WTC11 (cell line): ENCODE measurements at regions of chr22 and their contacts with region 1.

Region 1: GRCh38 chr22:20885557-20886323 is 26.9 kb downstream of the SNAP29 start:
- DNase-seq: peak; percentile 89
- ATAC-seq: peak; percentile 98
- H3K4me3 Mint-ChIP-seq: no peak overlapping the region
- H3K27ac Mint-ChIP-seq: peak overlapping the region; percentile 68
- H3K4me1 Mint-ChIP-seq: peaks cover 3% of the 10 kb centered on the region; the same call in 1 of the 2 replicates
- H3K27me3 Mint-ChIP-seq: no peaks in the 10 kb centered on the region
- CTCF ChIP-seq: peak; percentile 71

Region 2: GRCh38 chr22:20803696-20804324 is 81.9 kb before region 1 on chr22:
- CTCF ChIA-PET with region 1: interaction called, 37 read pairs
- POLR2A ChIA-PET with region 1: interaction called, 3 read pairs
- DNase-seq: peak; percentile 71
- ATAC-seq: peak; percentile 89
- H3K4me3 Mint-ChIP-seq: no peak overlapping the region
- H3K27ac Mint-ChIP-seq: no peak overlapping the region; the same call in 1 of the 2 replicates
- H3K4me1 Mint-ChIP-seq: no peaks in the 10 kb centered on the region
- H3K27me3 Mint-ChIP-seq: no peaks in the 10 kb centered on the region
- CTCF ChIP-seq: peak; percentile 47; the same call in 1 of the 2 replicates

Region 3: GRCh38 chr22:20899827-20900423 is 14.2 kb after region 1 on chr22:
- CTCF ChIA-PET with region 1: interaction called, 16 read pairs
- POLR2A ChIA-PET with region 1: no interaction called
- DNase-seq: no peak
- ATAC-seq: no peak
- H3K4me3 Mint-ChIP-seq: no peak overlapping the region
- H3K27ac Mint-ChIP-seq: no peak overlapping the region
- H3K4me1 Mint-ChIP-seq: no peaks in the 10 kb centered on the region
- H3K27me3 Mint-ChIP-seq: no peaks in the 10 kb centered on the region; the same call in none of the 2 replicates
- CTCF ChIP-seq: no peak

Region 4: GRCh38 chr22:20937031-20937793 is 51.5 kb after region 1 on chr22:
- CTCF ChIA-PET with region 1: interaction called, 10 read pairs
- POLR2A ChIA-PET with region 1: no interaction called
- DNase-seq: no peak
- ATAC-seq: no peak
- H3K4me3 Mint-ChIP-seq: no peak overlapping the region; the same call in 1 of the 2 replicates
- H3K27ac Mint-ChIP-seq: peak overlapping the region; percentile 89
- H3K4me1 Mint-ChIP-seq: peaks cover 38% of the 10 kb centered on the region
- H3K27me3 Mint-ChIP-seq: no peaks in the 10 kb centered on the region
- CTCF ChIP-seq: no peak

Region 5: DNA sequence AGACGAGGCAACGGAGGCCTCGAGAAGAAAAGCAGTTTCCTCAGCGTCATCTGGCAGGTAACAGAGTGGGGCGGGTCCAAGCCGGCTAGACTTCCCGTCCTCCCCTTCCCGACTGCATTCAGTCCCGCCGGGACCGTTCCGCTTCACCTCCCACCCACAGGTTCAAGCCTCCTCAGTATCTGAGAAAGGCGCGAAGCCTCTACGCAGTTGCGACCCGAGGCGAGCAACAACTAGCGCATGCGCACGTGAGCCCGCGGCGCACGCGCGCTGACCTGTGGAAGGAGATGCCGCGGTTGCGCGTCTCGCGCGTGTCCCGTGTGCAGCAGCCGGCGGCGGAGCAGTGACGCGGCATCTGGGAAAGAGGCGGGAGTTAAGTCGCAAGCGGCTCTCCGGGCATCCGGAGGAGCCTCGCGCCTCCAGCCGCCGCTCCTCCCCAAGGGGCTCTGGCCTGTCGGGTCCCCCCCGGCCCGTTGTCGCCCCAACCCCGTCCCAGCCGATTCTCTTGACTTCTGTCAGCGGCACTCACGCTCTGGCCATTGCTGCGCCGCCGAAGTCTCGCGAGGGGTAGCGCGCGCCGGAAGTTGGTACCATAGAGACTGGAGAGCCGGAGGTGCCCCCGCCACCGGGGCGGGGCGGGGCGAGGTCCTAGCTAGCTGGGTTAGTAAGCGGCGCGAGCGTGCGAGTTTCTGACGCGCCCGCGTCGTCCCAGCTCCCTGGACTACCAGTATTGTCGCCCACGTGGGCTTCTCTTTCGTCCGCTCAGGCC is 116.0 kb after region 1 on chr22 and contains the start of gene THAP7:
- CTCF ChIA-PET with region 1: interaction called, 11 read pairs
- POLR2A ChIA-PET with region 1: no interaction called
- DNase-seq: peak; percentile 94
- ATAC-seq: peak; percentile 87
- H3K4me3 Mint-ChIP-seq: peak within 1 kb of the TSS; percentile 87
- H3K27ac Mint-ChIP-seq: peak within 1 kb of the TSS; percentile 97
- H3K4me1 Mint-ChIP-seq: peaks cover 18% of the 10 kb centered on the region
- H3K27me3 Mint-ChIP-seq: no peaks in the 10 kb centered on the region
- CTCF ChIP-seq: no peak
- total RNA-seq, gene THAP7: 18.7 to 23.9 TPM (median 19.3 TPM) in 3 replicates